ENCODE measurements at regions of chr10 and their contacts with region 1.

Region 1: GRCh38 chr10:104337974-104338735 is at the start of gene ITPRIP:
- DNase-seq: peak; percentile 82
- H3K4me3 ChIP-seq: peak within 1 kb of the TSS; percentile 93 to 97 (median 95)
- H3K27ac ChIP-seq: peak within 1 kb of the TSS; percentile 97
- H3K4me1 ChIP-seq: peaks cover 33% of the 10 kb centered on the region
- H3K27me3 ChIP-seq: no peaks in the 10 kb centered on the region
- CTCF ChIP-seq: peak in 1 of 2 donors; percentile 22
- total RNA-seq, gene ITPRIP: 21.5 to 37.2 TPM

Region 2: GRCh38 chr10:104231784-104232612 is 106.2 kb before region 1 on chr10 and contains the start of gene CFAP43:
- CTCF ChIA-PET with region 1: no interaction called
- dilution Hi-C with region 1: no loop called
- in situ Hi-C with region 1: no loop called
- intact Hi-C with region 1: no loop called
- DNase-seq: peak; percentile 96
- H3K4me3 ChIP-seq: peak within 1 kb of the TSS; percentile 60 to 98 (median 77)
- H3K27ac ChIP-seq: peak within 1 kb of the TSS; percentile 82
- H3K4me1 ChIP-seq: peaks cover 5% of the 10 kb centered on the region
- H3K27me3 ChIP-seq: no peaks in the 10 kb centered on the region
- CTCF ChIP-seq: no peak
- total RNA-seq, gene CFAP43: 0.33 TPM in 1 of 2 donors, not detected in the other

Region 3: DNA sequence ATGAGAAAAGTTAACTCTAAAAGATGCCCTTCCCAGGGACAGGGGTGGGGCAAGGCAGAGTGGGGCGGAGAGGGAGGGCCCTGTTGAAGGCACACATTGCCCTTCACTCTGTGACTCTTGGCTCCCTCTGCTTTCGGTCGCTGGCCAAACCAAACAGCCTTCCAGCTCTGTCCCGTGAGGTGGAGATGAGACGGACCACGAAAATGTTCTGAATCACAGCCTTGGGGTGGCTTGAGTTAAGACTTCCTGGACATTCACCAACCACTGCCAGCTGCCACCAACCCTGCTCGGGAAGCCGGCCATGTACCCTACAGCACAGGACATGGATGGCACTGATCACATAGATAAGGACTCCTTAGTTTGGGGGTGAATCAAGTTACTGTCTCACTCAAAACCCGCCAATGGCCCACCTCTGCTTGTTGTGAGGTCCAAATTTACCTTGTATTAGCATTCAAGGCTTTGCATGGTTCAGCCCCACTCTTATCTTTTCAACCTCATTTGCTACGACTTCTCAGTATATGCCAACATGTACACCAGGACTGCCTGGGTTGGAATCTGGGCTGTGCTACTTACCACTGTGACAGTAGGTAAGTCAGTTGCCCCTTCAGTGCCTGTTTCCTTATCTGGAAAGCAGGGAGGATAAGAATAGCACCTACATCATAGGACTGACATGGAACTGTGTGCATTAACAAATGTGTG is 28.0 kb before region 1 on chr10:
- CTCF ChIA-PET with region 1: no interaction called
- dilution Hi-C with region 1: no loop called
- in situ Hi-C with region 1: no loop called
- intact Hi-C with region 1: loop called (anchors 1 kb)
- DNase-seq: peak; percentile 59
- H3K4me3 ChIP-seq: no peak overlapping the region
- H3K27ac ChIP-seq: peak overlapping the region; percentile 8
- H3K4me1 ChIP-seq: peaks cover 15% of the 10 kb centered on the region
- H3K27me3 ChIP-seq: no peaks in the 10 kb centered on the region
- CTCF ChIP-seq: no peak

Region 4: GRCh38 chr10:104322416-104322782 is 15.8 kb before region 1 on chr10:
- CTCF ChIA-PET with region 1: no interaction called
- dilution Hi-C with region 1: no loop called
- in situ Hi-C with region 1: no loop called
- intact Hi-C with region 1: loop called (anchors 2 kb)
- DNase-seq: peak; percentile 92
- H3K4me3 ChIP-seq: no peak overlapping the region
- H3K27ac ChIP-seq: peak overlapping the region; percentile 97
- H3K4me1 ChIP-seq: peaks cover 79% of the 10 kb centered on the region
- H3K27me3 ChIP-seq: no peaks in the 10 kb centered on the region
- CTCF ChIP-seq: peak in 1 of 2 donors; percentile 29

Region 5: DNA sequence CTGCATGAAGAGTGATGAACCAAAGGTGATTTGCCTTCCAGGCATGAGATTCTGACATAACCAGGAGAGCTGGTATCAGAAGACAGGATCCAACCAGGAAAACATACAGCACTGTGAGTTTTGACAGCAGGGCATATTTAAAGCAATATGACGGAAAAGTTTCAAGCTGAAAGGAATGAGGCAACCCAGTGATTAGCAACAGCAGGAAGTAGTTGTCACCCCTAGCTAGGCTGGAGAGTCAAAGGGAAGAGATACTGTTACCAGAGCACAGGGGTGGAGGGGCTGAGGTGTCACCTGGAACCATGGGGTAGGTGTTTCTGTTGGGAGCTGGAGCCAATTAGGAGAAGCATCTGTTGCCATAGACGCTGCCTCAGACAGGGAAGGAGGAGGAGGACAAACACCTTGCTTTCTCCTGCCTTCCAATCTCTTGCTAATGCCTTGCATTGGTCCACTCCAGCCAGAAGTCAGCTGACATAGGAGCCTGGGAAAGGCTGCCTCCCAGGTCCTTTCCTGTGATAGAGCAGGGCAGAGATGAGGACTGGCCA is 177.6 kb after region 1 on chr10:
- CTCF ChIA-PET with region 1: no interaction called
- dilution Hi-C with region 1: no loop called
- in situ Hi-C with region 1: no loop called
- intact Hi-C with region 1: no loop called
- DNase-seq: no peak
- H3K4me3 ChIP-seq: no peak overlapping the region
- H3K27ac ChIP-seq: no peak overlapping the region
- H3K4me1 ChIP-seq: no peaks in the 10 kb centered on the region
- H3K27me3 ChIP-seq: peaks cover under 1% of the 10 kb centered on the region
- CTCF ChIP-seq: no peak

Measured in mammary epithelial cell (primary cell).